ENCODE measurements at regions of chr1 and their contacts with region 1.

Region 1: GRCh38 chr1:39214998-39215873 is 10.7 kb downstream of the MACF1 start:
- DNase-seq: peak; percentile 69
- H3K4me3 ChIP-seq: peak overlapping the region in 1 of 3 experiments; percentile 5
- H3K27ac ChIP-seq: peak overlapping the region; percentile 68
- H3K4me1 ChIP-seq: peaks cover 52% of the 10 kb centered on the region
- H3K27me3 ChIP-seq: no peaks in the 10 kb centered on the region
- CTCF ChIP-seq: no peak

Region 2: DNA sequence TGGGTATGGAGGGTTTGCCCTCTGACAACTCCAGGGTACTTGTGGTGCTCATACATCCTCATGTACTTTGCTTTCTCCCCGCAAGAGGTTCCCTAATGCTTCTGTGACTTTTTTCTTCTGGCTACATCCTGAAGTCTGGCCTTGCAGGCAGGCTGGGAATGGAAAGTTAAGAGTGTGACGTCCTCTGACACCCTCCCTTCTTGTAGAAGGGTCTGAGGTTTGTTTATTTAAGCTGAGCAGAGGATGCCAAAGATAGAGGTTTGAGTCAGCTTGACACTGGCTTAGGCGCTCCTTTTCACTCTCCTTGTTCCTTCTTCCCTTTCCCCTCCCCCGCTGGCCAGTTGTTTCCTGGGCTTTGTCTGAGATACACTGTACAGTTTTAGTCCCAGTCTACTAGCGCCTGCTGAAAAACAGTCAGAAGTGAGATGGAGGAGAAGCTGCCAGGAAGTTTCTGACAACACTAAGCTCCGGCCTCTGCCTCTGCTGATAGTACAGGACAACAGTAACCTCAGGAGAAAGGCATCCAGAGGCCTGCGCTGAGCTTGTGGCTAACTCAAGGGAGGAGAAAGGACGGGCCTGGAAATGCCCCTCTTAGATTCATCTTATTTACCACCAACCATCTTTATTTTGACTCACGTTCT is 10.7 kb before region 1 on chr1 and contains the start of gene MACF1:
- CTCF ChIA-PET with region 1: no interaction called
- dilution Hi-C with region 1: no loop called
- in situ Hi-C with region 1: no loop called
- intact Hi-C with region 1: loop called (anchors 1 kb)
- DNase-seq: peak; percentile 72
- H3K4me3 ChIP-seq: peak within 1 kb of the TSS; percentile 6 to 27 (median 21)
- H3K27ac ChIP-seq: peak within 1 kb of the TSS; percentile 80
- H3K4me1 ChIP-seq: peaks cover 25% of the 10 kb centered on the region
- H3K27me3 ChIP-seq: no peaks in the 10 kb centered on the region
- CTCF ChIP-seq: peak; percentile 9 to 26
- total RNA-seq, gene MACF1: 304 to 440 TPM

Region 3: GRCh38 chr1:39250460-39251240 is 35.4 kb after region 1 on chr1:
- CTCF ChIA-PET with region 1: interaction called, 13 read pairs
- dilution Hi-C with region 1: loop called (anchors 5 kb)
- in situ Hi-C with region 1: no loop called
- intact Hi-C with region 1: no loop called
- DNase-seq: peak; percentile 48
- H3K4me3 ChIP-seq: no peak overlapping the region
- H3K27ac ChIP-seq: no peak overlapping the region
- H3K4me1 ChIP-seq: peaks cover 15% of the 10 kb centered on the region
- H3K27me3 ChIP-seq: no peaks in the 10 kb centered on the region
- CTCF ChIP-seq: no peak

Measured in mammary epithelial cell (primary cell).